Right ventricle myocardium inferior (tissue), 1 donor: ENCODE measurements at regions of chr4 and their contacts with region 1.

Region 1: DNA sequence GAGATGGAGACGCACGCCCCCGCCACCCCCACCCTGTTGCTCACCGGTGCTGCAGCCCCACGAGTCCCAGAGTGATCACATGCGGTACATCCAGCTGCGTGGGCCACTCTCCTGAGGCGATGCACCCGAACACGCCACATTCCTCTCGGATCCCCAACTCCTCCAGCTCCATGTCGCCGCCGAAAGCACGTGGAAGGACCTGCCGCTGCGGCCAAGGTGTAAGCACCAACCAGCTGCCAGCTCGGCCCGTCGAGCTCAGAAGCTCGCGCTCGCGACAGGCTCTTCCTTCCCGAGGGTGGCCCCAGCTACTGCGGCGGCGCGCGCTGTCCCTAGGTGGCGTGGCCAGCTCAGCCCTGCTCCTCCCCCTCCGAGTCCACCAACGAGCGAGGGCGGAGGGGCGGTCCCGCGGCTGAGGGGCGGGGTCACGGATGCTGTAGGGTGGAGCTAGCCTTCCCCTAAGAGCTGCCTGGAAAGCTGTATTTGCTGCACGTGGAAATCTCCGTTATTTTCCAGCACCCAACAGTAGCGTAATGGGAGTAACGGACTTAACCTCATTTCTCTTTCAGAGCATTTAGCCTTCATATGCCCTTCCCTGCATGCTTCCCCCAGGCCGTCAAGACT is at the start of gene PPAT:
- DNase-seq: peak; percentile 99
- ATAC-seq: peak; percentile 98
- total RNA-seq, gene PPAT: 3.1 TPM

Region 2: GRCh38 chr4:56077676-56078075 is 357.7 kb before region 1 on chr4:
- intact Hi-C with region 1: no loop called
- DNase-seq: no peak
- ATAC-seq: no peak

Region 3: DNA sequence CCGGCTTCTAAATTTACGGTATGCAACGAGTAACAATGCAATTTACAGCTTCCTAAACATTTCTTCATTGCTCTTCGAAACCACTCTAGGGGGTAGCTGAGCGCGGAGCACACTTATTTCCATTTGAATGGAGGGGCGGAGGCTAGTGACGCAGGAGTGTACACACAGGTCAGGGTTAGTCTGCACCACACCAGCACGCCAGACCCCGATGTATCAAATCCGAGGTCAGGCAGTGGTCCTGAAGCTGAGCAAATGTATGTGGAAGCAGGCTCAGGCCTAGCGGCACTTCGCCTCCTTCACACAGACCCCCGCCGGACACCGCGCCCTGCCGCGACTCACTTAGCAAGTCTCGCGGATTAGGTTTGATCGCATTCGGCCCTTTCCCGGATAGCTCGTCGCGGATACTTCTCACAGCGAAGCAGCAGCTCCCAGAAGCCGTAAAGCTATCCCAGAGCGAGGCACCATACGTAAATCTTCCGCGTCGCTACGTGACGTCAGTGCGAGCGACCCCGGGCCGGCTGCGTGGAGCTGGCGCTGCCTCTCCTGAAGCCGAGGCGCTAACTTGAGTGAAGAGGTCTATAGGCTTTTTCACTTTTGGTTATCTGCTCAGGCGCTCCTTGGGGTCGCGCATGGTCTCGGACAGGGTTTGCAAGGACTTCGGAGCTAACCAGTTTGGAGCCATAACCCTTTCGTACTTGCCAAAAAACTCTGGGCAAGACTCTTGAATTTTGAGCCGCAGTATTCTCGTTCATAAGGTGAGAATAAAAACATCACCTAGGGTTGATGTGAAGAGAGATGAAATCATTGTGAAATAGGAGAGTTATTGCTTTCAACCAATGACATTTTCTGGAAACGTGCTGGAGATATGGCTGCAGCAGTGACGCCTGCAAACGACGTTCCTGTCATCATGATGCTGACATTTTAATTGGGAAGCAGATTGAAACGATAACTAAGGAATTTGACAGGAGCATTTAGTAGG is 48.1 kb before region 1 on chr4 and contains the start of gene AASDH:
- intact Hi-C with region 1: loop called (anchors 1 kb)
- DNase-seq: peak; percentile 95
- ATAC-seq: peak; percentile 96
- total RNA-seq, gene AASDH: 6.5 TPM

Region 4: GRCh38 chr4:56465599-56466295 is 30.3 kb after region 1 on chr4:
- intact Hi-C with region 1: loop called (anchors 2 kb)
- DNase-seq: peak; percentile 41
- ATAC-seq: no peak

Region 5: DNA sequence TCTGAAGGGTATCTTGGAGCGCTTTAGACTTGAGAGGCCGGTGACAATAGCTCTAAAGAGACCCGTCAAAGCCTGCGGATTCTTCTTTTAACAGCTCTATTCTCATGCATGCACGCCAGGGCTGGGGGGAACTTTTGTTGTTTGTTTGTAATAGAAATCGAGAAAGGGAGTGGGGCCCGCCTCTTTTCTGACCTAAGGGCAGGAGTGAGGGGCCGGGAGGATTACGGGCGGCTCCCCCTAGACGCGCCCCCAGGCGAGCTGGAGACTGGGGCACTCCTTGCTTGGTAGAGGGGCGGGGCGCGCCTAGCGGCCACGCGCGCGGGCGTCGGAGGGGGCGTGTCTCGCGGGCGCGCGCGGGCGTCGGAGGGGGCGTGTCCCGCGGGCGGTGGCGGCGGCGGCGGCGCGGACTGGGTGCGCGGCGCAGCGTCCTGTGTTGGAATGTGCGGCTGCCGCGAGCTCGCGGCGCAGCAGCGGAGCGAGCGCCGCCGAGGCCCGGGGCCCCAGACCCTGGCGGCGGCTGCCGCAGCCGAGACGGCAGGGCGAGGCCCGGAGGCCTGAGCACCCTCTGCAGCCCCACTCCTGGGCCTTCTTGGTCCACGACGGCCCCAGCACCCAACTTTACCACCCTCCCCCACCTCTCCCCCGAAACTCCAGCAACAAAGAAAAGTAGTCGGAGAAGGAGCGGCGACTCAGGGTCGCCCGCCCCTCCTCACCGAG is 472.2 kb after region 1 on chr4 and contains the start of gene REST:
- intact Hi-C with region 1: loop called (anchors 10 kb)
- DNase-seq: peak; percentile 91
- ATAC-seq: peak; percentile 83
- total RNA-seq, gene REST: 25.0 TPM